Panc1 (cell line): ENCODE measurements at regions of chr2 and their contacts with region 1.

Region 1: GRCh38 chr2:9630749-9631483 is at the start of gene YWHAQ:
- DNase-seq: peak; percentile 94
- ATAC-seq: peak; percentile 92
- H3K4me3 ChIP-seq: peak within 1 kb of the TSS; percentile 65 to 91
- H3K27ac ChIP-seq: peak within 1 kb of the TSS; percentile 93
- H3K4me1 ChIP-seq: peaks cover 65% of the 10 kb centered on the region
- H3K27me3 ChIP-seq: no peaks in the 10 kb centered on the region
- CTCF ChIP-seq: no peak
- total RNA-seq, gene YWHAQ: 683 TPM

Region 2: GRCh38 chr2:9644603-9645002 is 13.7 kb after region 1 on chr2:
- CTCF ChIA-PET with region 1: no interaction called
- POLR2A ChIA-PET with region 1: interaction called, 15 read pairs
- in situ Hi-C with region 1: no loop called
- intact Hi-C with region 1: no loop called
- DNase-seq: no peak
- ATAC-seq: no peak
- H3K4me3 ChIP-seq: no peak overlapping the region
- H3K27ac ChIP-seq: no peak overlapping the region; the same call in none of the 2 replicates
- H3K4me1 ChIP-seq: peaks cover 40% of the 10 kb centered on the region
- H3K27me3 ChIP-seq: no peaks in the 10 kb centered on the region
- CTCF ChIP-seq: no peak

Region 3: DNA sequence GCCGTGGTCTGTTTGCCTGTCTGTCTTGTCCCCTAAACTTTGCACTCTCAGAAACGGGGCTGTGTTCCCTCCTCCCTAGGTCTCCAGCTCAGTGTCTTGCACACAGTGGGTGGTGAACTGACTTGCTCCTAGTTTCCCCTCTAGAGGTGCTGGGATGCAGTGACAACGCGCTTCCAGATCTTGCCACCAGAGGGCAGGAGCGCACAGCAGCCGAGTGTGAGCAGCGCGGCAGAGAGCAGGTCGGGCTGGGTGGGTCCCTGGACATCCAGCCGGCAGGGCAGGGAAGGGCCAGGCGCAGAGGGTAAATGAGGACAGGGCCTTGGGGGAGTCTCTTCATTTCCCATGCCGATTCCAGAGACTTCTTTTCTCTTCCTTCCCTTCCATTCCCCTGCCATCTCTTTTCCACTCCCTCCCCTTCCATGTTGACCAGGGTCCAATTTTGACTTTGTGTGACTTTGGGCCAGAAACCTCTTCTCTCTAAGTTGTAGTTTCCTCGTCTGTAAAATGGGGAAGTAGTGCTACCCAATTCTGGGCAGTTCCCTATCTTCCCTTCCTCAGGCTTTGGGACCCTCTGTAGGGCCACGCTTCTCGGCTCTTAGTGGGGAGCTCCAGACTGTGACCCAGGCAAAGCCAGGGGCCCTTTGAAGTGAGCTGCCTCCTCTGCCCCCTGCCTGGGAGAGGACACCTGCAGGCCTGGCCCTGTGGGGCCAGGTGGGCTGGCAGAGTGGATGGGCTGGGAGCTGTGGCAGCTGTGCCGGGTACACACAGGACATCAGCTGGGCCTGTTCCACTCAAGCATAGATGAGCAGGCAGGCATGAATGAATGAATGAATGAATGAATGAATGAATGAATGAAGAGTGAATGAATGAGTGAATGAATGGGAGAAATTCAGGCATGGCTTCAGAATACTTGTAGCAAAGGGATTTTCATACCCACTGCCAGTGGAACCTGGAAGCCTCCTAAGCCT is 169.0 kb after region 1 on chr2:
- CTCF ChIA-PET with region 1: no interaction called
- POLR2A ChIA-PET with region 1: no interaction called
- in situ Hi-C with region 1: no loop called
- intact Hi-C with region 1: loop called (anchors 10 kb)
- DNase-seq: peak; percentile 79
- ATAC-seq: peak; percentile 88
- H3K4me3 ChIP-seq: peak overlapping the region in 1 of 2 experiments; percentile 10; a peak in 1 of 4 replicates
- H3K27ac ChIP-seq: 0 out of 2 replicates have a peak overlapping the region, but pooled peaks have one; percentile 37
- H3K4me1 ChIP-seq: peaks cover 36% of the 10 kb centered on the region
- H3K27me3 ChIP-seq: no peaks in the 10 kb centered on the region
- CTCF ChIP-seq: peak; percentile 99